Breast epithelium (tissue), 4 donors: ENCODE measurements at regions of chr6 and their contacts with region 1.

Region 1: GRCh38 chr6:163036160-163036645 is 308.4 kb downstream of the PACRG start:
- DNase-seq: no peak
- H3K4me3 ChIP-seq: no peak overlapping the region
- H3K27ac ChIP-seq: no peak overlapping the region
- H3K4me1 ChIP-seq: no peaks in the 10 kb centered on the region
- H3K27me3 ChIP-seq: no peaks in the 10 kb centered on the region
- CTCF ChIP-seq: no peak
- POLR2A ChIP-seq: no peak

Region 2: GRCh38 chr6:162679681-162680080 is 356.5 kb before region 1 on chr6:
- intact Hi-C with region 1: loop called (anchors 5 kb)
- DNase-seq: no peak
- H3K4me3 ChIP-seq: no peak overlapping the region
- H3K27ac ChIP-seq: no peak overlapping the region
- H3K4me1 ChIP-seq: no peaks in the 10 kb centered on the region
- H3K27me3 ChIP-seq: no peaks in the 10 kb centered on the region
- CTCF ChIP-seq: no peak
- POLR2A ChIP-seq: no peak

Region 3: GRCh38 chr6:163249651-163250101 is 213.5 kb after region 1 on chr6:
- intact Hi-C with region 1: loop called (anchors 5 kb)
- DNase-seq: no peak
- H3K4me3 ChIP-seq: no peak overlapping the region
- H3K27ac ChIP-seq: no peak overlapping the region
- H3K4me1 ChIP-seq: no peaks in the 10 kb centered on the region
- H3K27me3 ChIP-seq: no peaks in the 10 kb centered on the region
- CTCF ChIP-seq: no peak
- POLR2A ChIP-seq: no peak

Region 4: DNA sequence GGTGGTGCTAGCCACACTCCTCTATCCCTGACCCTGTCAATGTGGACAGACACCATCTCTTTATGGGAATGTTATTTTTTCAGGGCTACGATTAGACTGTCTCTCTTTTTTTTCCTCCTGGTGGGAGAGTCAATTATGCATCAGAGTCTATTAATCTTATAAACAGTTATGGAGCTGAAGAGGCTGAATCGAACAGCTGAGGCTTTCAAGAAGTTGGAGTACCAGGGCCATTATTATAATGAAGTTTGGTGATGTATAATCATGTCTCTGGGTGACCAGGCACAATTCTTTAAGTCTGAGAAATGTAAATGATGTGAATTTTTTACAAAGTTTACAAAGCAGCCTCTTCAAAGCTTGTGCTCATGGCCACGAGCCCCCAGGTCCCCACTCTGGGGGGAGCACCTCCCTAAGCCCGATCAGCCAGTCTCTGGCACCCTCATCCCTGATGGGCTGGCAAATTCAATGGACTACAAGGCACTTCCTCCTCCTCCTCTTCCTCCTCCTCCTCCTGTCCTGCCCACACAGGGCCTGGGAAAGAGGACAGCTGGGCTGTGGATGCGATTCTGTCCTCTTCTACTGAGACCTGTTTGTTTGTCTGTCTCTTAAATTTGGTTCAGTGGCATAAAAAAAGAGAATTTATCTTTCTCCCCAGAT is 334.4 kb after region 1 on chr6:
- intact Hi-C with region 1: loop called (anchors 5 kb)
- DNase-seq: no peak
- H3K4me3 ChIP-seq: no peak overlapping the region
- H3K27ac ChIP-seq: no peak overlapping the region
- H3K4me1 ChIP-seq: no peaks in the 10 kb centered on the region
- H3K27me3 ChIP-seq: no peaks in the 10 kb centered on the region
- CTCF ChIP-seq: no peak
- POLR2A ChIP-seq: no peak